H1 (cell line): ENCODE measurements at regions of chr11 and their contacts with region 1.

Region 1: GRCh38 chr11:117843666-117844484 is 19.3 kb upstream of the FXYD2 start:
- DNase-seq: peak in 1 of 2 experiments; percentile 95
- H3K4me3 ChIP-seq: no peak overlapping the region
- H3K27ac ChIP-seq: no peak overlapping the region
- H3K4me1 ChIP-seq: no peaks in the 10 kb centered on the region
- H3K27me3 ChIP-seq: no peaks in the 10 kb centered on the region
- CTCF ChIP-seq: peak; percentile 92 to 94 (median 92)
- EP300 ChIP-seq: no peak
- POLR2A ChIP-seq: no peak
- RAD21 ChIP-seq: peak; percentile 91 to 94

Region 2: DNA sequence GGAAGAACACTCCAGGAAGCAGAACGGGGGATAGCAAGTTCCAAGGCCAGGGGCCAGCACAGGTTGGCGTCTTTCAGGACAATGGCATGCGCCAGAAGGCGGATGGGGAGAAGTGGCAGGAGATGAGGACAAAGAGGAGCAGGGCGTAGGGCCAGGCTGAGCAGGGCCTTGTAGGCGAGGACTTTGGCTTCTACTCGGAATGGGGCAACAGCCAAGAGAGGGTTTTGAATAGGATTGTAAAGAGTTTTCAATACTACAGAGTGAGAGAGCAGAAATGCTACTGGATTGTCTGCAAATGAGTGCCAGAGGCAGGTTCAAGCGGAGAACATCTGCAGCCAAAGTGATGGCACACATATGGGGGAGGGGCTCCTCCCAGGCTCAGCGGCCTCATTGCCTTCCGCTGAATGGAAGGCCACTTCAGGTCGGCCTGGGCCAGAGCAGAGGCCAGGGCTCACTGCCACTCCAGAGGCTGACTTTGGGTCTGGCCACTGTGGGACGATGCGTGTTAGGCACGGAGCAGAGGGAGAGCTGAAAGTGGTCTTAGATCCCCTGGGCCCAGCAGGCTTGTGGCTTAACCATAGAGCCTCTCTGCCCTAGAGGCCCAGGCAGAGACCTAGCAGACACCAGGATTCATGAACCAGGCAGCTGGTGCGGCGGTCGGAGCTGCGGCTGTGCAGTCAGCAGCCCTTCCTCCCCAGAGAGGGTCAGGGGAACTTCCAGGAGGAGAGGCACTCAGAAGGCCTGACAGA is 165.0 kb before region 1 on chr11:
- CTCF ChIA-PET with region 1: no interaction called
- POLR2A ChIA-PET with region 1: no interaction called
- DNase-seq: no peak
- H3K4me3 ChIP-seq: no peak overlapping the region
- H3K27ac ChIP-seq: no peak overlapping the region
- H3K4me1 ChIP-seq: peaks cover 6 to 30% (median 21%) of the 10 kb centered on the region in 4 experiments
- H3K27me3 ChIP-seq: no peaks in the 10 kb centered on the region; a peak in 3 of 7 replicates
- CTCF ChIP-seq: no peak
- EP300 ChIP-seq: no peak
- POLR2A ChIP-seq: no peak
- RAD21 ChIP-seq: no peak

Region 3: DNA sequence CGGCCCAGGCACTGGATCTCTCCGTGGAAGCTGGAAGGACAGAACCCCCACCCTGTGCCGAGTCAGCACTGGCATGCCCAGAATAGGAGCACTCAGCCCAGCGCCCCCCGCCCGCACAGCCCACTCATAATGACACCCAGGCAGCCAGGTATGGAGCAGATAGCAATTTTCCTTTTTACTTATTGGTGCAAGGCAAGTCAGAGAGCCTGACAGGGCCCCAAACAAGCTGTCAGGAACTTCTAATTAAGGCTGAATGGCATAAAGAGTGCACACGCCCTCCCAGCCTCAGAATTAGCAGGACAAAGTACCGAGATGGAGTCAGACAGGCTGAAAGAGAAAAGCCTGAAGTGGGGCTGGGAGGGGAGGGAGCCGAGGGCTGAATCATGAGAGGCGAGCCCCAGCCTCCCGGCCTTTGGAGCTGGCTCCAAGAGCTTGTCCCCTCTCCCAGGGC is 123.8 kb before region 1 on chr11:
- CTCF ChIA-PET with region 1: no interaction called
- POLR2A ChIA-PET with region 1: no interaction called
- DNase-seq: no peak
- H3K4me3 ChIP-seq: peak overlapping the region in 1 of 4 experiments; percentile 27; a peak in 1 of 8 replicates
- H3K27ac ChIP-seq: no peak overlapping the region
- H3K4me1 ChIP-seq: peaks cover 11 to 28% (median 22%) of the 10 kb centered on the region in 4 experiments
- H3K27me3 ChIP-seq: peaks cover 0 to 8% (median 4%) of the 10 kb centered on the region in 4 experiments; a peak in 3 of 7 replicates
- CTCF ChIP-seq: no peak
- EP300 ChIP-seq: no peak
- POLR2A ChIP-seq: no peak
- RAD21 ChIP-seq: no peak

Region 4: DNA sequence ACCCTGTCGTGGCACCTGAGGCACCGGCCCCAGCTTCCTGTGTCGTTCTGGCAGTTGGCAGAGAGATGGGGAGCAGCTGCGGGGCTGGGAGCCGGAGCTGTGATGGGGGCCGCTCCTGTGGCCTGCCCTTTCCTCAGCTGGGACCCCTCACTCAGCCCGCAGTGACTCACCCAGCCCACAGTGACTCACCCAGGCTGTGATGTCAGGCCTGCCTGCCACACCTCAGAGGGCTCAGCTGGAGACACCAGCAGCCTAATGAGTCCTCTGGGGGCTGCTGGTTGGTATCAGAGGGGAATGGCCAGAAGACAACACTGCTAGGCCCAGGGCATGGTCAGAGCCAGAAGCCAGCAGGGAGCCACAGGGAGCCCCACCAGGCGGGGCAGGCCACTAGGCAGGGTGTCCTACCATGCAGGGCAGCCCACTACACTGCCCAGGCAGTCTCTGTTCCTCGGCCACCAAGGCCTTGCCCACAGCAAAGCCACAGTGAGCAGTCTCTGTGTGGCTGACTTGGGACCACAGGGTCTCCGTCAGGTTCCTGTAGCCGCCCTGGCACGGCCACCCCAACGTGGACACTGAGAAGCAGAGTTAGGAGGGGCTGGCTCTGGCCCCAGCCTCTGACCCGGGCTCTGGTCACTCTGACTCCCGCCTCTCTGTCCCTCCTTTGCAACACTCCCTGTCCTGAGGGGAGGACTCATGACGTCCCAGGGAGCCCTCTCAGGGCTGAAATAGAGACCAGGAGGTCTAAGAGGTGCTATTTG is 15.1 kb before region 1 on chr11:
- CTCF ChIA-PET with region 1: interaction called, 45 read pairs
- POLR2A ChIA-PET with region 1: no interaction called
- DNase-seq: peak in 1 of 2 experiments; percentile 43
- H3K4me3 ChIP-seq: no peak overlapping the region
- H3K27ac ChIP-seq: no peak overlapping the region; the same call in 1 of the 2 replicates
- H3K4me1 ChIP-seq: peaks cover 0 to 18% (median 10%) of the 10 kb centered on the region in 4 experiments; a peak in 6 of 7 replicates
- H3K27me3 ChIP-seq: no peaks in the 10 kb centered on the region; a peak in 1 of 7 replicates
- CTCF ChIP-seq: no peak
- EP300 ChIP-seq: no peak
- POLR2A ChIP-seq: no peak
- RAD21 ChIP-seq: no peak

Region 5: GRCh38 chr11:117866526-117866925 is 22.7 kb after region 1 on chr11:
- CTCF ChIA-PET with region 1: interaction called, 24 read pairs
- POLR2A ChIA-PET with region 1: no interaction called
- DNase-seq: peak in 1 of 2 experiments; percentile 30
- H3K4me3 ChIP-seq: no peak overlapping the region
- H3K27ac ChIP-seq: no peak overlapping the region
- H3K4me1 ChIP-seq: peaks cover 7 to 28% (median 21%) of the 10 kb centered on the region in 4 experiments
- H3K27me3 ChIP-seq: no peaks in the 10 kb centered on the region
- CTCF ChIP-seq: no peak
- EP300 ChIP-seq: no peak
- POLR2A ChIP-seq: no peak
- RAD21 ChIP-seq: no peak

Region 6: GRCh38 chr11:117885777-117886176 is 41.9 kb after region 1 on chr11:
- CTCF ChIA-PET with region 1: interaction called, 32 read pairs
- POLR2A ChIA-PET with region 1: no interaction called
- DNase-seq: peak in 1 of 2 experiments; percentile 40
- H3K4me3 ChIP-seq: no peak overlapping the region
- H3K27ac ChIP-seq: no peak overlapping the region
- H3K4me1 ChIP-seq: peaks cover 0 to 10% (median 2%) of the 10 kb centered on the region in 4 experiments; a peak in 3 of 7 replicates
- H3K27me3 ChIP-seq: no peaks in the 10 kb centered on the region; a peak in 1 of 7 replicates
- CTCF ChIP-seq: no peak
- EP300 ChIP-seq: no peak
- POLR2A ChIP-seq: no peak
- RAD21 ChIP-seq: no peak

Region 7: GRCh38 chr11:117907251-117907981 is 63.5 kb after region 1 on chr11:
- CTCF ChIA-PET with region 1: interaction called, 122 read pairs
- POLR2A ChIA-PET with region 1: no interaction called
- DNase-seq: peak; percentile 64 to 92
- H3K4me3 ChIP-seq: peak overlapping the region; percentile 2 to 34 (median 12); a peak in 4 of 8 replicates
- H3K27ac ChIP-seq: no peak overlapping the region
- H3K4me1 ChIP-seq: peaks cover 0 to 12% (median 3%) of the 10 kb centered on the region in 4 experiments; a peak in 5 of 7 replicates
- H3K27me3 ChIP-seq: no peaks in the 10 kb centered on the region
- CTCF ChIP-seq: no peak
- EP300 ChIP-seq: no peak
- POLR2A ChIP-seq: no peak
- RAD21 ChIP-seq: no peak